AG04450 (cell line): ENCODE measurements at regions of chr12 and their contacts with region 1.

Region 1: DNA sequence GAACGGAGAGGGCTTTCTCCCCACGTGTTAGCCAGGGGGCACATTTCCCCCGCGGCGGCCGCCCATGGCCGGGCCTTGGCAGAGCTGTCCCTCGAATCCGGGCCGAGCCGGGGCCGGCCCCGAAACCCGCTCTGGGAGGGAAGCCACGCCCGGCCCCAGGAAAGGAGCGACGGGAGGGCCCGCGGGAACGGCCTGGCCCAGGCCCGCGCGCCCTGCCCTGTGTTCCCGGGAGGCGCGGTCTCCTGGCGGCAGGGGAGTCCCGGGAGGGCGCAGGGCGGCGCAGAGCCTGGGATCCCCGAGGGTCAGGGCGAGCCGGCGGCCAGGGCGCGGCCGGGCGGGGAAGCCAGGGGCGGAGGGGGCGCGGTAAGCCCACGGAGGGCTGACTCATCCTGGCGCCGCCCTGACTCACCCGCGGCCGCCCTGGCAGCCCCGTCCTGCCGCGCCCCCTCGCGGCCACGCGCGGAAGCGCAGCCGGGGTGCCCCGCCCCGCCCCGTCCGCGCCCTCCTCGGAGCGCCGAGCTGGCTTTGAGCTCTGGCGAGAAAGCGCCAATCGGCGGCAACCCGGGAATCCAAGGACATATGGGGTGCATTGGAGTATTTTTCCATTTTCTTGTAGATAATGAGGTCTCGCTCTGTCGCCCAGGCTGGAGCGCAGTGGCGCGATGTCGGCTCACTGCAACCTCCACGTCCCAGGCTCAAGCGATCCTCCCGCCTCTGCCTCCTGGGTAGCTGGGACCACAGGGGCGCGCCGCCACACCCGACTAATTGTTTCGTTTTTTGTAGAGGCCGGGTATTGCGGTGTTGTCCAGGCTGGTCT is 31.8 kb upstream of the PLEKHG6 start:
- DNase-seq: no peak
- H3K4me3 ChIP-seq: peak overlapping the region; percentile 52
- H3K27ac ChIP-seq: no peak overlapping the region
- H3K27me3 ChIP-seq: no peaks in the 10 kb centered on the region
- CTCF ChIP-seq: peak; percentile 50

Region 2: DNA sequence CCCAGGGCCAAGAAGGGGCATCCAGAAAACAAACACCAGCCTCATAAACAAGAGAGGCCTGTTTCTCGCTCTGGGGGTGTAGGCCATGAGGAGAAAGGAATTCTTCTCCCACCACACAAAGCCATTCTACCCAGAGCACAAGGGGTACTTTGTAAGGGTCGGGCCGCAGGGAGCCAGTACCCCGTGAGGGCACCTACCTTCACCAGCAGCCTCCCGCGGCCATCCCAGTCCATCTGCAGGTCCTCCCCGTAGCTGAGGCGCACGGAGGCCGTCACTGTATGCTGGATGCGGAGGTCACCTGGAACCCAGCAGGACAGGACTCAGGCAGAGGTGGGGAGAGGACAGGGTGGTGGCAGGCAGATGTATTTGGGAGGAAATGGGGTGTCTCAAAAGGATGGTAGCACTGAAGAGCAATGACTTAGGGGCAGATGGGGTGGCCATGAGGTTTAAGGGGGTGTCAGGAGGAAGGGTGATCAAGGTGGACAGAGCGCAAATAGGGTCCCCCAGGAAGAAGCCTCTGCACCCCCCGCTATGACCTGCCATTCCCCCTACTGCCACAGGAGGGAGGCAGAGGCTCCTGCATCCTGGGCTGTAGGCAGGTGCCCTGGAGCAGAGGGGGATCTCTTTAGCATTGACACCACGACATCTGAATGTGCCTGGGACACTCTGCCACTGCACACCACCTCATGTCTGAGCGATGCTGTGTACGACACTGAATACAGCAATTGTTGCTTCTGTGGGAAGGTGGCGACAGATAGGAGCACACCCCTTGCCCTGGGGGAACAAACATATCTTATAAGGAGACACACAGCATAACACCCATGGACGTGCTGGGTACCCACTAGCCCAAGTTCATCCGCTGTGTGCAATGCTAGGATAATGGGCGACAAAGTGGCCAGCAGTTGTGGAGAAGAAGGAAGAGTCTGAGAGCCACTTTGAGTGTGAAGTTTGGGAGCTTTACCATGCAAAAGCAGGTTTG is 215.6 kb before region 1 on chr12:
- CTCF ChIA-PET with region 1: interaction called, 23 read pairs
- POLR2A ChIA-PET with region 1: no interaction called
- DNase-seq: peak; percentile 21
- H3K4me3 ChIP-seq: no peak overlapping the region
- H3K27ac ChIP-seq: no peak overlapping the region
- H3K27me3 ChIP-seq: no peaks in the 10 kb centered on the region
- CTCF ChIP-seq: peak; percentile 99

Region 3: DNA sequence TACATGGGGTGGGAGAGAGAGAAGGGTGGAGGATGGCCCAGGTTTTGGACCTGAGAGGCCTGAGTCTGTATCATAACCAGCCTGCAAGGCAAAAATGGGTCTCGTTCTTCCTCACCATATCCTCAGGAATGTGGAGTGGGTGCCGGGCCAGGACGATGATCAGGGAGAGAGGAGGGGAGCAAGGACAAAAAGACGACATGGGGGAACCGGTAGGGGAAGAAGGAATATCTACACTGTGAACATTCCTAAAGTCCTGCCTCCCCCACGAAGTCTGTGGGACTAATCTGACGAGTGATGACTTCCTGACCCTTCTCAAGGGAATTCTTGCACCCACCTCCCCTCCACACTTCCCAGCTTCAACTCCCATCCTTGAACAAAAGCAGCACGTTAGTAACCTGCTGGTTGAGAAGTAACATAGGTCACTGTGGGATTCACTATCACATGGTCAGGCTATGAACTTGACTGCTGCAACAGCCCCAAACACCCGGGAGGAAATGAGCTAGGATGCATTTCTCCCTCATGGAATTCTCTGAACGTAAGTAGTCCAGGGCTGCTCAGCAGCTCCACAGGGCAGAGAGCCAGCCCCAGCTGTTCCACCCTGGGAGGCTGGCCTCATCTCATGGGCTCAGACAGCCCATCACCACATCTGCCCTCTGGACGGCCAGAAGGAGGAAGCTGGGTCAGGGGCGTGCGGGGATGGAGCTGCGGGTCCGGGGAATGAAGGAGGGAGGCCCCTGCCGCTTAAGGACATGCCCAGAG is 117.3 kb before region 1 on chr12:
- CTCF ChIA-PET with region 1: interaction called, 10 read pairs
- POLR2A ChIA-PET with region 1: no interaction called
- DNase-seq: peak; percentile 74
- H3K4me3 ChIP-seq: no peak overlapping the region
- H3K27ac ChIP-seq: peak overlapping the region; percentile 73
- H3K27me3 ChIP-seq: no peaks in the 10 kb centered on the region
- CTCF ChIP-seq: no peak

Region 4: DNA sequence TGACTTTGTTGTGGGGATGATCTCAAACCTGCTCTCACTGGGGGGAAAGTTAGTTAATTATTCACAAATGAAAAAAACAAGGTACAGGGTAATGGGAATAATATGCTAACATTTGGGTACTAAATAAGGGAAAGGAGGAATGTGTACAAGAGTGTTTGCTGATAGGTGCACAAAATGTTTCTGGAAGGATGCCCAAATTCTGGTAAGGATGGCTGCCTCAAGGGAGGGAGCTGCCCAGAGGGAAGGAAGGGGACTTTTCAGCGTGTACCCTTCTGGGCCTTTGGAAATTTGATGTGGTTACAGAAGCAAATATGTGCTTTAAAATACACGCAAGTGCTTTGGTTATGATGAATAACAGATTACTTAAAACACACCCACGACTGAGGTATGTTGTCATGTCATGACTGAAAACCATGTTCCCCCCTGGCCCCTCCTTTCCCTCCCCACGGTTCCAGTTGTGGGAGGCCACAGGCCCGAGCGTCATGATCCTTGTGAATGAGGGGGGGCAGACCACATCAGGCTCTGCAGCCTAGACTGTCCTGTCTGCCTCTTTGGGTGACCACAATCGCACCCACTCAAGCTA is 11.4 kb before region 1 on chr12:
- CTCF ChIA-PET with region 1: interaction called, 10 read pairs
- POLR2A ChIA-PET with region 1: no interaction called
- DNase-seq: no peak
- H3K4me3 ChIP-seq: no peak overlapping the region
- H3K27ac ChIP-seq: no peak overlapping the region
- H3K27me3 ChIP-seq: peaks cover 2% of the 10 kb centered on the region
- CTCF ChIP-seq: no peak

Region 5: GRCh38 chr12:6476489-6476888 is 197.8 kb after region 1 on chr12:
- CTCF ChIA-PET with region 1: no interaction called
- POLR2A ChIA-PET with region 1: no interaction called
- DNase-seq: peak; percentile 57
- H3K4me3 ChIP-seq: no peak overlapping the region
- H3K27ac ChIP-seq: peak overlapping the region; percentile 22
- H3K27me3 ChIP-seq: peaks cover 4% of the 10 kb centered on the region
- CTCF ChIP-seq: no peak

Region 6: GRCh38 chr12:6703631-6704030 is 425.0 kb after region 1 on chr12:
- CTCF ChIA-PET with region 1: no interaction called
- POLR2A ChIA-PET with region 1: no interaction called
- DNase-seq: no peak
- H3K4me3 ChIP-seq: no peak overlapping the region
- H3K27ac ChIP-seq: no peak overlapping the region
- H3K27me3 ChIP-seq: peaks cover 3% of the 10 kb centered on the region
- CTCF ChIP-seq: no peak